ENCODE measurements at regions of chr11 and their contacts with region 1.

Region 1: DNA sequence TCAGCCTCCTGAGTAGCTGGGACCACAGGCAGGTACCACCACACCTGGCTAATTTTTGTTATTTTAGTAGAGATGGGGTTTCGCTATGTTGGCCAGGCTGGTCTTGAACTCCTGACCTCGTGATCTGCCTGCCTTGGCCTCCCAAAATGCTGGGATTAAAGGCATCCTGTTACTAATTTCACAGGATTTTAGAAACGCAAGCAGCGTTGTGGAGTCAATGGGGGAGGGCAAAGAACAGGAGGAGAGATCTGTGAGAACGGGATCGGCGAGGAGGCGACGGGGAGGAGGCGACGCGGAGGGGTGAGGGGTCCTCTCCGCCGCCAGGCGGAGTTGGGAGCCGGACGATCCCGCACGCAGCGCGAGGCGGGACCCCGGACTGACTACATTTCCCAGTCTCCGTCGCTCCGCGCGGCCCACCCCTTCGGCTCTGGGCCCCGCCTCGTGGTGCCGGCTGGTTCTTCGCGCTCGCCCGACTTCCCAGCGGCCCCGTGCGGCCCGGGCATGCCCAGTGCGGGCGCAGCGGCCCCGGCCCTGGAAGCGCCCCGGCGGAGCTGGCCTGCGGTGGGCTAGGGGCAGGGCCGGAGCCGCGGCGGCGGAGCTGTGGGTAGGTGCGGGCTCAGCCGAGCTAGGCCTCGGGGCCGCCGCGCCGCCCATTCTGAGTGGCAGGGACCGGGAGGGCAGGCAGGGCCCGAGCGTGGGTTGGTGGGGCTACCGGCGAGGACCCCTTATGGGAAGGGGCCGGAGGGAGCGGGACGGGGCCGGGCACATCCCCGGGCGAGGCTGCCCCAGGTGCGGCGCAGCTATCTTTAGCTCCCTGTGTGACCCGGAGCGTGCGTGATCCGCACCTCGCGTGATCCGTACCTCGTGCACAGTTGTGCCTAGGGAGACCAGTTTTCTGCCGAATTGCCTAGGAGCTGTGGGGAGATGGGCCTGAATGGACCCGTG is at the start of gene EI24:
- DNase-seq: peak; percentile 92
- CTCF ChIP-seq: peak; percentile 46

Region 2: DNA sequence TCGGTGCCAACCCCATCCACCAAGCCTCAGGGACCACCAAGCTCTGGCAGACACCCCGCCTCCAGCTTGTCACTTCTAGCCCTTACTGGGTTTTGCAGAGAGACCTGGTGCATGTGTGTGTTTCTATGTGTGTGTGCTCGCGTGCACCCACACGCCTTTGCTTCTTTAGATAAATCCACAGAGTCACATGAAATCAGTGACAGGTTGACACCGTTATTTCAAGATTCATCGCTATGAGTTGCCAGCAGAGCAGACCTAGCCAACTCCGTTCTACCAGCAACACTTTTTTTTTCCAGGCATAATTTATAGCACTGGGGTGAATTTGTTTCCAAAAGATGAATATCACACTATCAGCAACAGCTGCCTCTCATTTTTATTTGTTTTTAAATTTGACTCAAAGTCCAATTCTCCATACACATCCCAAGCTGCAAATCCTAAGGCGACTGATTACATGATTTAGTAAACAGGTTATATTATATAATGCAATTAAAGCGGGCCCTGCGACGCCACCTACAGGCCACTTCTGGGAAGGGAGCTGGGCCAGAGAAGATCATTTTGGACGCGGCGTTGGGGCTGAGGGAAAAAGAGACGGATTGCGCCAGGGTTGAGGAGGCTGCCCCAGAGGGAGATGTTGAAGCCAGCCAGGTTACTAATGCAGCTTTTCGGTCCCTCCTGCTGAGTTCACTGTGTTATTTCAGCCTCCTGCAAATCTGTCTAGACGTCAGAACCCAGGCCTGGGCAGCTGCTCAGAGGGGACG is 223.6 kb before region 1 on chr11:
- CTCF ChIA-PET with region 1: no interaction called
- POLR2A ChIA-PET with region 1: no interaction called
- DNase-seq: peak; percentile 66
- CTCF ChIP-seq: peak; percentile 72

Region 3: GRCh38 chr11:125583496-125583895 is 14.3 kb after region 1 on chr11:
- CTCF ChIA-PET with region 1: interaction called, 10 read pairs
- POLR2A ChIA-PET with region 1: no interaction called
- DNase-seq: no peak
- CTCF ChIP-seq: no peak

Region 4: GRCh38 chr11:125662689-125663088 is 93.4 kb after region 1 on chr11:
- CTCF ChIA-PET with region 1: no interaction called
- POLR2A ChIA-PET with region 1: no interaction called
- DNase-seq: no peak
- CTCF ChIP-seq: no peak

Region 5: DNA sequence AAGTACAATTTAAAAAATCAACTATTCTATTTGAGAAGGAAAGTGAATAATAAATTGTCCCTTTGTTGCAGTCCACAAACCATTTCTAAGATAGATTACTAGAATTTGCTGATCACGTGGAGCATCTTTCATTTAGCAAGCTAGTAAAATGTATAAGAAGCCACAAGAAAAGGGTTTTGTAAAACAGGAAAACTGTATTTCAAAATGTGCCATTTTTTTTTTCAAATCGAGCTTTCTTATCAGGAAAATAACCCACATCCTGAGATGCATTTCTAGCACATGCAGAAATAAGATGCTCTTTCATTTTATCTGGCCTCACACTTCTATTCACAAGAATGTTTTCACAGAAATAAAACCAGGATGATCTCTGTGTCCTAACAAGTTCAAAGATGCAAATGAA is 215.4 kb after region 1 on chr11:
- CTCF ChIA-PET with region 1: no interaction called
- POLR2A ChIA-PET with region 1: no interaction called
- DNase-seq: no peak
- CTCF ChIP-seq: no peak

Measured in GM10248 (cell line).